ENCODE measurements at regions of chr22 and their contacts with region 1.

Region 1: GRCh38 chr22:50250555-50251476 is at the start of gene HDAC10:
- DNase-seq: peak; percentile 77 to 83 (median 81)
- H3K4me3 ChIP-seq: peak within 1 kb of the TSS; percentile 38 to 90 (median 76)
- H3K27ac ChIP-seq: peak within 1 kb of the TSS in 1 of 2 experiments; percentile 49
- H3K4me1 ChIP-seq: peaks cover 0 to 37% (median 31%) of the 10 kb centered on the region in 4 experiments
- H3K27me3 ChIP-seq: no peaks in the 10 kb centered on the region

Region 2: DNA sequence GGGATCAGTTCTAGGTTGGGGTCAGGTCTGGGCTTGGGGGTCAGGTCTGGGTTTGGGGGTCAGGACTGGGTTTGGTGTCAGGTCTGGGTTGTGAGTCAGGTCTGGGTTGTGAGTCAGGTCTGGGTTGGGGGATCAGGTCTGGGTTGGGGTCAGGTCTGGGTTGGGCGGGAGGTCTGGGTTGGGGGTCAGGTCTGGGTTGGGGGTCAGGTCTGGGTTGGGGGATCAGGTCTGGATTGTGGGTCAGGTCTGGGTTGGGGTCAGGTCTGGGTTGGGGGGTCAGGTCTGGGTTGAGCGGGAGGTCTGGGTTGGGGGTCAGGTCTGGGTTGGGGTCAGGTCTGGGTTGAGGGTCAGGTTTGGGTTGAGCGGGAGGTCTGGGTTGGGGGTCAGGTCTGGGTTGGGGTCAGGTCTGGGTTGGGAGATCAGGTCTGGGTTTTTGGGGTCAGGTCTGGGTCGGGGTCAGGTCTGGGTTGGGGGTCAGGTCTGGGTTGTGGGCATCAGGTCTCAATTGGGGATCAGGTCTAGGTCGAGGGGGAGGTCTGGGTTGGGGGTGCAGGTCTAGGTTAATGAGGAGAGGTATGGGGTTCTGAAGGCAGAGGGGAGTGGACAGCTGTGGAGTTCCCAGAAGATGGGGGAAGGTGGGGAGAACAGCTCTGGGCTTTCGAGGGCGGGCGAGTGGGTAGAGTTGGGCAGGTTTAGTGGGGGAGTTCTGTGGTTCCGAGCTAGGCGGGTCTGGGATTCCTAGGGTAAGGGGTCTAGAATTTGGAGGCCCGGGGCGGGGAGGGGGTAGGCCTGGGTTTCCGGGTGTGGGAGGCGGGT is 193.4 kb before region 1 on chr22:
- CTCF ChIA-PET with region 1: no interaction called
- POLR2A ChIA-PET with region 1: no interaction called
- DNase-seq: no peak
- H3K4me3 ChIP-seq: no peak overlapping the region
- H3K27ac ChIP-seq: no peak overlapping the region
- H3K4me1 ChIP-seq: peaks cover 0 to 46% (median 25%) of the 10 kb centered on the region in 4 experiments
- H3K27me3 ChIP-seq: peaks cover 0 to 16% (median 0%) of the 10 kb centered on the region in 5 experiments

Region 3: DNA sequence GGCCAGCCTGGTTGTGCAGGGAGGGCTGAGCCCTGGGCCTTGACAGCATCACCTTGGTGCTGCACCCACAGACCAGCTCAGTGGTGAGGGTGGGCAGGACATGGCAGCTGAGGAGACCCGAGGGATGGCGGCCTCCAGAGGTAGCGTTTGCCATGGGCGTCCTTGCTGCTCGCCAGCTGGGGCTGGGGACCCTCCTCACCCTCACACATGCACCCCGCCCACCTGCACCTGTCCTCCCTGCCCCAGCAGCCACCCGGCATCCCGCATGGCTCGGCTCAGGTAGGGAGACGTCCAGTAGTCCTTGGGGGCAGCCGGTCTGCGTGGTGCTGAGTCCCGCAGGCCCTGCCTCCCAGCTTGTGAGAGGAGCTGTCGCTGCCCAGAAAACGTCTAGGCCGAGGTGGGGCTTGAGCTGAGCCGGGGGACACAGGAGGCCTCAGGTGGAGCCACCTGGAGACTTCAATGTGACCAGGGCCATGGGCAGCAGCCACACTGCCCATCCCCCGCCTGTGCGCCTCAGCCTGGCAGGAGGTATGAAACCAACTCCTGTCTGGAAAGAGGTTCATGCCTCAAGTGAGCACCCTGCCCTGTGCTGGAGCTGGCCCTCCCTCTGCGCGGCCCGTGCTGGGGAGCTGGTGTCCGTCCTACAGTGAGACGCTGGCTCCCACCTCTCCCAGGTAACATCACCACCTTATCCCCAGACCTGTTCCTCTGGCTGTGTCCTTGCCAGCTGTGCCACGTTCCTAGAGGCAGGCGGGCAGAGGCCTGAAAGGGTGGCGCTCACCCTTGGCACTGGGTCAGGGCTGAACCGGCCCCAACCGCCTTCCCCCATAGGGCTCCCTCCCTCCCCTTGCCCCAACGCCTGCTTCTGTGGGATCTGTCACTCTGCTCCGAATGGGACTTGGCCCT is 68.4 kb before region 1 on chr22:
- CTCF ChIA-PET with region 1: no interaction called
- POLR2A ChIA-PET with region 1: no interaction called
- DNase-seq: no peak
- H3K4me3 ChIP-seq: no peak overlapping the region
- H3K27ac ChIP-seq: no peak overlapping the region
- H3K4me1 ChIP-seq: peaks cover 0 to 59% (median 44%) of the 10 kb centered on the region in 4 experiments
- H3K27me3 ChIP-seq: peaks cover 0 to 6% (median 0%) of the 10 kb centered on the region in 5 experiments

Region 4: DNA sequence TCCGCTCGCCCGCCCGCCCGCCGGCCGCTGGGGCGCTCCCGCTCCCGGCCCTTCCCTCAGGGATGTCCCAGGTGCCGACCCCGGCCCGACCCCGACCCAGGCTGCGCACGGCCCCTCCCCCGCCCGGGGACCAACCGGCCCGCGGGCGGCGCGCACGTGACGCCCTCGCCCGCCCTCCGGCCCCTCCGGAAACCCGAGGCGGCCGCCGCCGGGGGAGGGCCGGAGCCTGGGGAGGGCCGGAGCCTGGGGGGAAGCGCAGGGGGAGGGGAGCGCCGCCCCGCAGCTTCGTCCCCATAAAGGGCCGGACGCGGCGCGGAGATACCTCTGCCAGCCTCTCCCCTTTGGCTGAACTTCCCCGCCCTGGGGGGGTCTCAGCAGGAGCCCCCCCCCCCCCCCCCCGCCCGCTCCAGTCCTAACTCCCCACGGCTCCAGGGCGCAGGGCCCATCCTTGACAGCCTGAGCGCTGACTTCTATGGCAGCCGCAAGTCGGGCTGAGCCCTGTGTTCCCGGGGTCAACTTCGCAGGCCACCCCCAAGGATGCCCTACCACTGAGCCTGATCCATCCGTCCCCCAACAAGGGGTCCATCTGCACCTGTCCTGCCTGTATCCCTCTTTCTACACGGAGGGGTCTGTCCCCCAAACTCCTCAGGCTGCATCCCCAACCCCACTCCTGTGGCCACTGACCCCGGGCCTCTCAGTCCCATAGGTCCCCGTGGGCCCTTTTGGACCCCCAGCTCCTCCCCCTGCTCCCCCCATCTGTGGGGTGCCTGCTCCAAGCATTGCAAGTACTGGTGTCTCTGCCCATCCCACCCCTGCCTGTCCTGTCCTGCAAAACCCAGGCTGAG is 11.0 kb after region 1 on chr22 and contains the start of gene MAPK12:
- CTCF ChIA-PET with region 1: interaction called, 31 read pairs
- POLR2A ChIA-PET with region 1: interaction called, 3 read pairs
- DNase-seq: no peak
- H3K4me3 ChIP-seq: peak within 1 kb of the TSS; percentile 13 to 72 (median 61)
- H3K27ac ChIP-seq: no peak within 1 kb of the TSS
- H3K4me1 ChIP-seq: peaks cover 0 to 26% (median 24%) of the 10 kb centered on the region in 4 experiments
- H3K27me3 ChIP-seq: no peaks in the 10 kb centered on the region

Region 5: DNA sequence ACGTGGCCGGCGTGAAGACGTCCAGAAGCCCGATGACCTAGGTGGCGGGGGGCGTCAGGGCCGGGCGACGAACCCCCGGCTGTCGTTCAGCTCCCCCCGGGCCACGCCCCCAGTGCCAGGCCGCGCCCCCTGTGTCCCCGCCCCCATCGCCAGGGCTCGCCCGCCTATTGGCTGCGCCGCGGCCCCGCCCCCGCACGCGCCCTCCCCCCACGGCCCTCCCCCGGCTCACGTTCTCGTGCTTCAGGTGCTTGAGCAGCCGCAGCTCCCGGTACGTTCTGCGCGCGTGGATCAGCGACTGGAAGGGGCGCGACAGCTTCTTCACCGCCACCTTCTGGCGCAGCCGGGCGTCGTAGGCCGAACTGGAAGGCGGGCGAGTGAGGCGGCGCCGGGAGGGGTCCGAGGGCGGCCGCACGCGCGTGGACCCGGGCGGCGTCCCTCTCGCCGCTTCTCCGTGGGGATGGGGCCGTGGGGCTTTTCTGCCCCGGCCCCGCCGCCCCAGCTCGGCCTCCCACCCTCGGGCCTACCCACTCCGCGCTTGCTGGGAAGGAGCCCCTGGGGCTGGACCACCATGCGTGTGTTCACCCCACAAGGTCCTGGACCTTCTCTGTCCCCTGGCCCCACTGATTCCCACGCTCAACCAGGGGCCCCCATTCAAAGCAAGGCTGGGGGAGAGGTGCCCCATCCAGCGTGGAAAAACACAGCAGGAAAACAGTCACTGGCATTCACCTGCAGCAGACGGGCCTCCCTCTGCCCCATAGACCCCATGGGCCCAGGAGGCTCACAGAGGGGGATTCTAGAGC is 17.0 kb after region 1 on chr22:
- CTCF ChIA-PET with region 1: interaction called, 31 read pairs
- POLR2A ChIA-PET with region 1: interaction called, 5 read pairs
- DNase-seq: peak; percentile 79 to 84 (median 81)
- H3K4me3 ChIP-seq: peak overlapping the region in 1 of 7 experiments; percentile 23
- H3K27ac ChIP-seq: no peak overlapping the region
- H3K4me1 ChIP-seq: peaks cover 0 to 54% (median 43%) of the 10 kb centered on the region in 4 experiments
- H3K27me3 ChIP-seq: peaks cover 0 to 14% (median 4%) of the 10 kb centered on the region in 5 experiments

Measured in common myeloid progenitor, CD34-positive (primary cell).